Gastrocnemius medialis (tissue), 4 donors: ENCODE measurements at regions of chr14 and their contacts with region 1.

Region 1: DNA sequence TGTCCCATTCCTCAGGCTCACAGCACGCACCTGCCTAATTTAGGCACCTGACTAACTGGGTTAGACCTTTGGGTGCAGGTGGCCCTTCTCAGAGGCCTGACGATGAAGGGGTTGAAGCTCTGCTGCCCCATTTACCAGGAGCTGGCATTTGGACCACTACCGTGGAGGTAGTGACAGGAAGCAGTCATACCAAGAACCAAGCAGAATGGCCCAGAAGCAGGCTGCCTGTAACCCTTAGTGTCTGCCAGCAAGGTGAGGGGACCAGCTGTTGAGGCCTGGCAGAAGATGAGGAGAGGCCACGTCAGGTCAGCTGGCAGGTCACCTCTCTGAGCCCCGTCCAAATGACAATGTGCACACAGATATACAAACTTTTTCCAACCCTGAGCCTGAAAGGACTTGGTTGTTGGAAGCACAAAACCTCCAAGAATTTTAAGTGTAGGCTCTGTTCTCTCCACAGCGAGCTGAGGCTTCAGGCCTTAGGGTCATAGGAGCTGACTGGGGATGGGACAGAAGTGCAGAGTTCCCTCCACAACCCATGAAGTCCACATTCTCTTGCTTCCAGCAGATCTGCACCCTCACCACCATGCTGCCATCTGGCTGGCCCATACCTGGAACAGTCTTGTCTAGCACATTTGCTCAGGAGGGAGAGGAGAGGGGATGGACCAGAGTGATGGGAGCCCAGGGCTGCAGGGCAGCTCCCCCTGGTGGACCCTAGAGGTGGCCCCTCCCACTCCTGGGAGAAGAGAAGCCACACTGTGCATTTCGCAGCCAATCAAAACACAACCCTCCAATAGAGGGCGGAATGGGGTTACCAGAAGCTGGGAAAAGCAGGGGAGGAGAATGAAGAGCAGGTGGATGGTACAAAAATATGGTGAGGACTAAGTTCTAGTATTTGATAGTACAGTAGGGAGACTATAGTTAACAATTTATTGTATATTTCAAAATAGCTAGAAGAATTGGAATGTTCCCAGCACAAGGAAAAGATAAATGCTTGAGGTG is 23.3 kb downstream of the VASH1 start:
- DNase-seq: peak; percentile 49 to 62
- ATAC-seq: peak; percentile 82 to 88
- H3K4me3 ChIP-seq: no peak overlapping the region
- H3K27ac ChIP-seq: peak overlapping the region in 2 of 4 donors; percentile 1 to 29
- H3K4me1 ChIP-seq: peaks cover 6 to 15% of the 10 kb centered on the region in 2 donors
- H3K27me3 ChIP-seq: no peaks in the 10 kb centered on the region
- CTCF ChIP-seq: peak; percentile 55 to 84 (median 76)
- POLR2A ChIP-seq: no peak

Region 2: GRCh38 chr14:76710056-76711010 is 74.2 kb before region 1 on chr14:
- in situ Hi-C with region 1: loop called (anchors 5 to 10 kb)
- intact Hi-C with region 1: loop called (anchors 1 kb)
- DNase-seq: no peak
- ATAC-seq: peak; percentile 54 to 58
- H3K4me3 ChIP-seq: no peak overlapping the region
- H3K27ac ChIP-seq: no peak overlapping the region
- H3K4me1 ChIP-seq: no peaks in the 10 kb centered on the region
- H3K27me3 ChIP-seq: no peaks in the 10 kb centered on the region
- CTCF ChIP-seq: peak; percentile 49 to 80 (median 70)
- POLR2A ChIP-seq: no peak